H1 (cell line): ENCODE measurements at regions of chr9 and their contacts with region 1.

Region 1: GRCh38 chr9:137286975-137287383 is 9.5 kb downstream of the TOR4A start:
- DNase-seq: peak in 1 of 2 experiments; percentile 68
- H3K4me3 ChIP-seq: no peak overlapping the region
- H3K27ac ChIP-seq: no peak overlapping the region
- H3K4me1 ChIP-seq: peaks cover 0 to under 1% (median 0%) of the 10 kb centered on the region in 4 experiments; a peak in 1 of 7 replicates
- H3K27me3 ChIP-seq: no peaks in the 10 kb centered on the region; a peak in 2 of 7 replicates
- CTCF ChIP-seq: peak; percentile 82 to 87 (median 84)
- EP300 ChIP-seq: no peak
- POLR2A ChIP-seq: no peak
- RAD21 ChIP-seq: peak; percentile 91 to 92

Region 2: GRCh38 chr9:137200311-137201204 is 86.4 kb before region 1 on chr9 and contains the start of gene TPRN:
- CTCF ChIA-PET with region 1: no interaction called
- POLR2A ChIA-PET with region 1: no interaction called
- DNase-seq: peak; percentile 96 to 97
- H3K4me3 ChIP-seq: peak within 1 kb of the TSS; percentile 64 to 78 (median 69)
- H3K27ac ChIP-seq: no peak within 1 kb of the TSS; the same call in 1 of the 2 replicates
- H3K4me1 ChIP-seq: peaks cover 8 to 28% (median 18%) of the 10 kb centered on the region in 4 experiments
- H3K27me3 ChIP-seq: no peaks in the 10 kb centered on the region
- CTCF ChIP-seq: no peak
- EP300 ChIP-seq: no peak
- POLR2A ChIP-seq: peak in 1 of 2 experiments; percentile 88; a peak in 2 of 3 replicates
- RAD21 ChIP-seq: no peak
- total RNA-seq, gene TPRN: 23.2 and 27.2 TPM in 2 replicates

Region 3: DNA sequence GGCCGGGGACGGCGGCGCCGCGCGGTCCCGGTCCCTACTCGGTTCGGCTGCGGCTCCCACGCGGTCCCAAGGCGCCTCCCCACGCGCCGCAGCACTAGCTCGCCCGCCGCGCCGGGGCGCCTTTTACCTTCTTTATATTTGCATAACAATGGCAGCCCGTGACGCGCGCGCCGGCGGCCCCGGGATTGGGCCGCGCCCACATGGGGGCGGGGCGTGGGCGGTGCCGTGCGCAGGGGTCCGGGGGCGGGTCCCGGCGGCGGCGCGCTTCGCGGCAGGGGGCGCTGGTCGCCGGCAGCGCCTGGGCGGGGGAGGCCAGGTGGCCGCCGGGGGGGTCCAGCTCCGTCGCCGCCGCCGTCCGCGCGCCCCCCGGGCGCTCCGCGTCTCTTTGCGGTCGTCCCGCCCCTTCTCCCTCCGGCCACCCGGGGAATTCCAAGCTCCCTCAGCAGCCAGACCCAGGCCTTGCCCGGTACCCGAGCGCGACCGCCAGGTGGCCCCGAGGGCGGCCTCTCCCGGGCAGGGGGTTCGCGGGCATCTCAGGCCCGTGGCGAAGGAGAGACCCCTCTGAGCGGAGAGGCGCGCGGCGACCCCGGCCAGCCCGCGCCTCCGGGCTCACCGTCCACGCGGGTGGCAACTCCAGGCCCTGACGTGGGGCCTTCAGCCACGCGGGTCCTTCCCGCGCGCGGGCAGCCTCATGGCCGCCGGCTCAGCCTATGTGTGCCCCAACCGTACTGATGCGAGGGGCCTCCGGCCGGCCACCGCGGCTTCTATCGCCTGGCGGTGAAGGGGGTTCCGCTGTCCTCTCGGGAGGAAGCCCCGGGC is 15.4 kb after region 1 on chr9 and contains the start of gene NRARP:
- CTCF ChIA-PET with region 1: interaction called, 21 read pairs
- POLR2A ChIA-PET with region 1: interaction called, 7 read pairs
- DNase-seq: peak in 1 of 2 experiments; percentile 94
- H3K4me3 ChIP-seq: peak within 1 kb of the TSS; percentile 83 to 97 (median 84)
- H3K27ac ChIP-seq: 0 out of 2 replicates have a peak within 1 kb of the TSS, but pooled peaks have one; percentile 33
- H3K4me1 ChIP-seq: peaks cover 3 to 57% (median 47%) of the 10 kb centered on the region in 4 experiments
- H3K27me3 ChIP-seq: peaks cover 0 to 16% (median 7%) of the 10 kb centered on the region in 4 experiments; a peak in 5 of 7 replicates
- CTCF ChIP-seq: peak in 2 of 3 experiments; percentile 56 to 74; a peak in 3 of 4 replicates
- EP300 ChIP-seq: no peak
- POLR2A ChIP-seq: peak in 1 of 2 experiments; percentile 78; a peak in 1 of 3 replicates
- RAD21 ChIP-seq: peak; percentile 32 to 54; a peak in 2 of 4 replicates
- total RNA-seq, gene NRARP: 35.4 and 37.2 TPM in 2 replicates

Region 4: GRCh38 chr9:137316012-137316976 is 29.3 kb after region 1 on chr9:
- CTCF ChIA-PET with region 1: interaction called, 18 read pairs
- POLR2A ChIA-PET with region 1: interaction called, 3 read pairs
- DNase-seq: peak in 1 of 2 experiments; percentile 79
- H3K4me3 ChIP-seq: peak overlapping the region; percentile 0 to 58 (median 12); a peak in 4 of 8 replicates
- H3K27ac ChIP-seq: no peak overlapping the region
- H3K4me1 ChIP-seq: peaks cover 0 to 32% (median 15%) of the 10 kb centered on the region in 4 experiments; a peak in 6 of 7 replicates
- H3K27me3 ChIP-seq: peaks cover 0 to 4% (median 0%) of the 10 kb centered on the region in 4 experiments; a peak in 2 of 7 replicates
- CTCF ChIP-seq: no peak; a peak in 1 of 4 replicates
- EP300 ChIP-seq: no peak
- POLR2A ChIP-seq: no peak
- RAD21 ChIP-seq: no peak

Region 5: DNA sequence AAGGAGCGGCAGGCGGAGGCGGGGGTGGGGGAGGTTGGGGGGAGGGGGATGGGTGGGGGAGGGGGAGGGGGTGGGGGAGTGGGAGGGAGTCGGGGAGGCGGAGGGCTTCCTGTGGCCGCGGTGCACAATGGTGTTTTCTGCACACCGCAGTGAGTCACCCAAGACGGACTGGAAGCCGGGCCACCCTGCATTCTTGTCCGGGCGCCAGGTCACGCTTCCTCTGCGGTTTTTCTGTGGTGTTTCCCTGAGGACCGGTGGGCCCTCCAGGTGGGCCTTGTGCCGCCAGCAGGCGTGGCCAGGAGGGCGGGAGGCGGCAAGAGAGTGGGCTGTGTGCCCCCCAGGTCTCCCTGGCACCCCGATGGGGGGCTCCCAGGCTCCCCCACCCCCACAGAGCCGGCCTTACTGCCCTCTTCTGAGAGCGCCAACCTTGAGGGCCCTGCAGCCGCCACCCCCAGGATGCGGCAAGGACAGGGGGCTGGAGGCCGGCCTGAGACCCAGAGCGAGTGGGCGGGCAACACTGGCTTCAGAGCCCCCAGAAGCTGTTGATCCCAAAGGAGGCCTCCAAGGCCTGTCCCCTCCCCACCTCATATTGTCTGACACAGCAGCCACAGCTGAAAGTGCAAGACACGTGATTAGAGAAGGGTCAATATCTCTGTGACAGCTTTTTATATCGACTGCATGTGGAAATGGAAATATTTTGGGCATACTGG is 124.8 kb after region 1 on chr9:
- CTCF ChIA-PET with region 1: interaction called, 12 read pairs
- POLR2A ChIA-PET with region 1: no interaction called
- DNase-seq: no peak
- H3K4me3 ChIP-seq: no peak overlapping the region
- H3K27ac ChIP-seq: no peak overlapping the region
- H3K4me1 ChIP-seq: peaks cover 0 to 5% (median 0%) of the 10 kb centered on the region in 4 experiments; a peak in 5 of 7 replicates
- H3K27me3 ChIP-seq: no peaks in the 10 kb centered on the region
- CTCF ChIP-seq: no peak
- EP300 ChIP-seq: no peak
- POLR2A ChIP-seq: no peak
- RAD21 ChIP-seq: no peak

Region 6: DNA sequence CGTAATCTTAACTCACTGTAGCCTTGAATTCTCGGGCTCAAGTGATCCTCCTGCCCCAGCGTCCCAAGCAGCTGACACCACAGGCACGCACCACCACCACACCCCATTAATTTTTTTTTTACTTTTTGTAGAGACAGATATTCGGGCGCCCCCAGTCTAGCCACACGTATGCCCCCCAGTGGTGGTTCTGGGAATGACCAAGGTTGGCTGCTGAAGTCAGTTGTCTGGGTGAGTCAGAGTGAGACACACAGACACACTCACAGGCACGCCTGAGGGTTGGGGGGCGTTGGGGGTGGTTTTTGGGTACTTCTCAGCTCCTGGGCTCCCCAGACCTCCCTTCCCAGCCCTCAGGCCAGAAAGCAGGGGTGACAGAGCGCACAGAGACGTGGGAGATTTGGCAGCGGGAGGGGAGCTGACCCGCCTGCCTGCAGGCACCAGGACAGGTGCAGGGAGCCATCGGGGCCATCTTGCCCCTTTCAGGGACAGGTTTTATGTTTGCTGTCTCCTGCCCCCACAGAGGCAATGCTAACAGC is 158.4 kb after region 1 on chr9:
- CTCF ChIA-PET with region 1: interaction called, 20 read pairs
- POLR2A ChIA-PET with region 1: no interaction called
- DNase-seq: peak in 1 of 2 experiments; percentile 97
- H3K4me3 ChIP-seq: no peak overlapping the region
- H3K27ac ChIP-seq: no peak overlapping the region
- H3K4me1 ChIP-seq: peaks cover 0 to 3% (median under 1%) of the 10 kb centered on the region in 4 experiments; a peak in 3 of 7 replicates
- H3K27me3 ChIP-seq: no peaks in the 10 kb centered on the region
- CTCF ChIP-seq: peak in 2 of 3 experiments; percentile 77 to 89; a peak in 3 of 4 replicates
- EP300 ChIP-seq: no peak
- POLR2A ChIP-seq: no peak
- RAD21 ChIP-seq: peak; percentile 56 to 72